ENCODE measurements at regions of chr4 and their contacts with region 1.

Region 1: GRCh38 chr4:159498446-159499115 is 395.7 kb downstream of the RAPGEF2 start:
- DNase-seq: no peak
- ATAC-seq: no peak
- H3K4me3 ChIP-seq: no peak overlapping the region
- H3K4me3 Mint-ChIP-seq: no peak overlapping the region
- H3K27ac ChIP-seq: no peak overlapping the region
- H3K27ac Mint-ChIP-seq: no peak overlapping the region
- H3K4me1 ChIP-seq: no peaks in the 10 kb centered on the region
- H3K4me1 Mint-ChIP-seq: no peaks in the 10 kb centered on the region
- H3K27me3 ChIP-seq: no peaks in the 10 kb centered on the region
- H3K27me3 Mint-ChIP-seq: peaks cover under 1% of the 10 kb centered on the region
- CTCF ChIP-seq: no peak

Region 2: GRCh38 chr4:158371158-158371557 is 1127.4 kb before region 1 on chr4:
- CTCF ChIA-PET with region 1: no interaction called
- POLR2A ChIA-PET with region 1: no interaction called
- intact Hi-C with region 1: no loop called
- DNase-seq: no peak
- ATAC-seq: no peak
- H3K4me3 ChIP-seq: no peak overlapping the region
- H3K4me3 Mint-ChIP-seq: no peak overlapping the region
- H3K27ac ChIP-seq: no peak overlapping the region
- H3K27ac Mint-ChIP-seq: no peak overlapping the region
- H3K4me1 ChIP-seq: no peaks in the 10 kb centered on the region
- H3K4me1 Mint-ChIP-seq: no peaks in the 10 kb centered on the region
- H3K27me3 ChIP-seq: no peaks in the 10 kb centered on the region
- H3K27me3 Mint-ChIP-seq: no peaks in the 10 kb centered on the region
- CTCF ChIP-seq: no peak

Region 3: DNA sequence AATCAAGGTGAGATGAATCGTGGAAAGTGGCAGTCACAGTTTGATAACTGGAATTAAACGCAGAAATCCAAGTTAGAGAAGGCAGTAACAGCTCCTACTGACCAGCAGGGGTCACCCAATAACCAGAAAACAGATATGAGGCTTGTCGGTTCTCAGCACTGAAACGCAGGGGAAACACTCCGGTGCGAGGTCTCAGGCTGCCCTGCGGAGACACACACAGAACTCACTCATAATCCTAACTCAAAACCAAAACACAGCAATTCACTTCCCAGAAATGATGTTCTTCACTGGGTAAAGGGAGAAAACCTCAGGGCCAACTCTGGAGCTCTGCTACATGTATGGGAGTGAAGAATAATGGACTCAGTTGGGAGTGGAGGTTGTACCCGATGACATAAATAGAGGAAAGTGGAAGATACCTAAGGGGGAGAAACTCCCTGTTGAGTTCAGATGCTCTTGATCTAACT is 11.3 kb before region 1 on chr4:
- CTCF ChIA-PET with region 1: interaction called, 17 read pairs
- POLR2A ChIA-PET with region 1: no interaction called
- intact Hi-C with region 1: no loop called
- DNase-seq: peak; percentile 35
- ATAC-seq: no peak
- H3K4me3 ChIP-seq: no peak overlapping the region
- H3K4me3 Mint-ChIP-seq: no peak overlapping the region
- H3K27ac ChIP-seq: no peak overlapping the region
- H3K27ac Mint-ChIP-seq: no peak overlapping the region
- H3K4me1 ChIP-seq: no peaks in the 10 kb centered on the region
- H3K4me1 Mint-ChIP-seq: no peaks in the 10 kb centered on the region
- H3K27me3 ChIP-seq: peaks cover 0 to 4% (median 0%) of the 10 kb centered on the region in 4 experiments
- H3K27me3 Mint-ChIP-seq: peaks cover 4% of the 10 kb centered on the region
- CTCF ChIP-seq: peak; percentile 65

Measured in B cell (primary cell).